Spleen (tissue), 13 donors: ENCODE measurements at regions of chr2 and their contacts with region 1.

Region 1: GRCh38 chr2:33673937-33674336 is 74.8 kb upstream of the FAM98A start:
- DNase-seq: no peak
- H3K4me3 ChIP-seq: no peak overlapping the region
- H3K27ac ChIP-seq: no peak overlapping the region
- H3K4me1 ChIP-seq: no peaks in the 10 kb centered on the region
- H3K27me3 ChIP-seq: peaks cover 0 to 10% (median 0%) of the 10 kb centered on the region in 7 donors
- CTCF ChIP-seq: peak in 4 of 11 experiments; percentile 14 to 42 (median 32)
- POLR2A ChIP-seq: no peak

Region 2: DNA sequence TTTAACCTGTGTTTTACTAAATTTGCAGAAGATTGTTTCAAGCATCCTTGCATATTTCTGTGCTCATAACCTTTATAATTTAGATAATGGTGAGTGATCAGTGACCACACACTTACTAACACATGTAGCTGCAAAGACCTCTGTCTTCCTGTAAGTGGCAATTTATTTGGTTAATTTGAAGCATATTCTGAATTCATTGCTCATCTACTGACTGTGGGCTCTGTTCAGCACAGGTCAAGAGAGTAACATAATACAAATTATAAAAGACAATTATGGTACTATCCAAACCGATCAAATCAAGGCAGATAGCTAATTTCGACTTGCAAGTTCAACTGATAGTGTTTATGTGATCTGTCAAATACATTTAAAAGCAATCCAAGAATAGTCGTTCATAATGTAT is 149.0 kb after region 1 on chr2:
- intact Hi-C with region 1: no loop called
- DNase-seq: no peak
- H3K4me3 ChIP-seq: no peak overlapping the region
- H3K27ac ChIP-seq: no peak overlapping the region
- H3K4me1 ChIP-seq: no peaks in the 10 kb centered on the region
- H3K27me3 ChIP-seq: no peaks in the 10 kb centered on the region
- CTCF ChIP-seq: no peak
- POLR2A ChIP-seq: no peak

Region 3: GRCh38 chr2:35408320-35408719 is 1734.4 kb after region 1 on chr2:
- intact Hi-C with region 1: loop called (anchors 10 kb)
- DNase-seq: no peak
- H3K4me3 ChIP-seq: no peak overlapping the region
- H3K27ac ChIP-seq: no peak overlapping the region
- H3K4me1 ChIP-seq: no peaks in the 10 kb centered on the region
- H3K27me3 ChIP-seq: no peaks in the 10 kb centered on the region
- CTCF ChIP-seq: no peak
- POLR2A ChIP-seq: no peak